Adrenal gland (tissue), 19 donors: ENCODE measurements at regions of chr10 and their contacts with region 1.

Region 1: DNA sequence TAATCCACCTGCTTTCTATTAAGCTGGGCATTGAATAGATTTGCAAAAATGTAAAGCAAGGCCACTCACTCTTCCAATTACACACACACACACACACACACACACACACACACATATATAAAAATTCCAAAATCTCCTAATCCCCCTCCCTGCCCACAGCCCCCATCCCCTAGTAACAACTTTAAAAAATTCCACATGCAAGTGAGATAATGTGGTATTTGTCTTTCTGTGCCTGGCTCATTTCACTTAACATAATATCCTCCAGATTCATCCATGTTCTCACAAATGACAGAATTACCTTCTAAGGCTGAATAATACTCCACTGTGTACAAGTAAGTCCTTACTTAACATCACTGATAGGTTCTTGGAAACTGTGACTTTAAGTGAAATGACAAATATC is 24.2 kb downstream of the SH2D4B start:
- DNase-seq: no peak
- H3K4me3 ChIP-seq: no peak overlapping the region
- H3K27ac ChIP-seq: no peak overlapping the region
- H3K4me1 ChIP-seq: no peaks in the 10 kb centered on the region
- H3K27me3 ChIP-seq: no peaks in the 10 kb centered on the region
- CTCF ChIP-seq: no peak
- POLR2A ChIP-seq: no peak

Region 2: DNA sequence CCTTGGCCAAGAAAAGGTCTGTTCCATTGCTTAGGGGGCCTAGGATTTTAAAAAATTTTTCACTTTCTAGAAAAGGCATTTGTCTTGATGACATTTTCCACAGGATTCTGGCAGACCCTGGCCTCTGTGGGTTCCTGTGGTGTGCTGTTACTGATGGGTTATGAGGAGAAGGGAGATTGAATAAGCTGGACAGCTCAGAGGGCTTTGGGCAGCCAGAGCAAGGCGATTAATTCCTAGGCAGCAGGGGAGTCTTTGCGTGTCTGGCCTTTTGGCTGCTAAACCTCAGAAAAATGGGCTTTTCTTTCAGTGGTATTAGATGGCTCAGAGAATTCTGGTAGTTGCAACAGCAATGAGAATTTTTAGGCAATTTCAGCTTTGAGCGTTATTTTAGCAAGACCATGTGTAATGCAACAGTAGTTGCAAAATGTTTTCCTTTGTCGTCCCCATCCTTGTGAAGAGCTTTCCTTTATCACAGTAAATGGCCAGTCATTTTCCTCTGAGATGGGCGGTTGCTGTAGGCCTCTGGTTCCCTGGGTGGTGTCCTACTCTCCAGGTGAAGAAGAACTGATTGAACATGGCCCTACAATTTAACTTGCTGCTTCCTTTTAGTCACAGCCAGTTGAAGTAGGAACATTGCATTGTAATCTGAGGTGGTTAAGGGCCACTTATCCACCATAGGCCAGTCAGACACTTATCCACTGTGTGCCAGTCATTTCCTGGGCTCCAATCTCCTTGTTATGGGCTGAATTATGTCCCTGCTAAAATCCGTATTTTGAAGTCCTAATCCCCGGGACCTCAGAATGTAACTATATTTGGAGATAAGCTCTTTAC is 18.9 kb after region 1 on chr10:
- intact Hi-C with region 1: loop called in 1 of 2 experiments (anchors 2 kb)
- DNase-seq: no peak
- H3K4me3 ChIP-seq: no peak overlapping the region
- H3K27ac ChIP-seq: no peak overlapping the region
- H3K4me1 ChIP-seq: no peaks in the 10 kb centered on the region
- H3K27me3 ChIP-seq: no peaks in the 10 kb centered on the region
- CTCF ChIP-seq: no peak
- POLR2A ChIP-seq: no peak

Region 3: DNA sequence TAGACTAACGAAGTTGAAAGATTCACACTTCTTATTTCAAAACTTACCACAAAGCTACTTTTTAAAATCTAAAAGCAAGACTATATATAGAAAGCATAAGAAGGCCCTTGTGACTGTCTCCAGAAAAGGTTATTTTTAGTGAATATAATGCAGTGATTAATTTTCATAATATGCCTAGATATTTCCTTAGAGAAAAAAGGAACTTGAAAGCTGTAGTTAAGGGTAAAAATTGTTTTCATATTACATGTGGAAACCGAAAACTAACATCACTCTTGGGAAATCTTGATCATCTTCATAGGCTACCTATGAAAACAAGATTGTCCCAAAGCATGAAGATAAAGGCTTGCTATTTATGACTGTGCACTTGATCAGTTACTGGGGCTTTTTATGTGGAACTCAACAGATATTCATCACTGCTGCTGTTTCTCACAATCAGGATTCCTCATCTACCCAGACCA is 199.0 kb after region 1 on chr10:
- intact Hi-C with region 1: no loop called
- DNase-seq: no peak
- H3K4me3 ChIP-seq: no peak overlapping the region
- H3K27ac ChIP-seq: no peak overlapping the region
- H3K4me1 ChIP-seq: no peaks in the 10 kb centered on the region
- H3K27me3 ChIP-seq: no peaks in the 10 kb centered on the region
- CTCF ChIP-seq: no peak
- POLR2A ChIP-seq: no peak